ENCODE measurements at regions of chr2 and their contacts with region 1.

Region 1: DNA sequence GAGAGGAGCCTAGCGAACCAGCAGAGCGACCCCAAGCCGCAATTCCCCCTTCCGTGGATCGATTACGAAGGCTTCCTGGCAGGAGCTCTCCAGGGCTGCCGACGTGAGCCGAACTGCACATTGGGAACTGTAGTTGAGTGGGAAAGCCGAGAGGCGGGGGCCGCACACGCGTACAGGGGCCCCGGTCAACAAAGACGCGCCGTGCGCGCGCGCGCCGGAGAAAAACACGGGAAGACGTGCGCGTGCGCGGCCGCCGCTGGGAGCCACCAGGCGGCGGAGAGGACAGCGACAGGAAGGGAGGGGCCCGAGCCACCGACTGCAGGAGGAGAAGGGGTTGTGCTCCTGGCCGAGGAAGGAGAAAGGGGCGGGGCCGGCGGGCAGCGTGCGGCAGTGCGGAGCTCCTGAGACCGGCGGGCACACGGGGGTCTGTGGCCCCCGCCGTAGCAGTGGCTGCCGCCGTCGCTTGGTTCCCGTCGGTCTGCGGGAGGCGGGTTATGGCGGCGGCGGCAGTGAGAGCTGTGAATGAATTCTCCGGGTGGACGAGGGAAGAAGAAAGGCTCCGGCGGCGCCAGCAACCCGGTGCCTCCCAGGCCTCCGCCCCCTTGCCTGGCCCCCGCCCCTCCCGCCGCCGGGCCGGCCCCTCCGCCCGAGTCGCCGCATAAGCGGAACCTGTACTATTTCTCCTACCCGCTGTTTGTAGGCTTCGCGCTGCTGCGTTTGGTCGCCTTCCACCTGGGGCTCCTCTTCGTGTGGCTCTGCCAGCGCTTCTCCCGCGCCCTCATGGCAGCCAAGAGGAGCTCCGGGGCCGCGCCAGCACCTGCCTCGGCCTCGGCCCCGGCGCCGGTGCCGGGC is at the start of gene SPAST:
- DNase-seq: peak; percentile 99
- ATAC-seq: peak; percentile 89
- H3K4me3 ChIP-seq: peak within 1 kb of the TSS; percentile 93
- H3K27ac ChIP-seq: peak within 1 kb of the TSS; percentile 48
- H3K4me1 ChIP-seq: peaks cover 19% of the 10 kb centered on the region
- H3K27me3 ChIP-seq: no peaks in the 10 kb centered on the region
- CTCF ChIP-seq: peak; percentile 37; the same call in 1 of the 2 replicates
- total RNA-seq, gene SPAST: 15.5 and 21.6 TPM in 2 replicates

Region 2: DNA sequence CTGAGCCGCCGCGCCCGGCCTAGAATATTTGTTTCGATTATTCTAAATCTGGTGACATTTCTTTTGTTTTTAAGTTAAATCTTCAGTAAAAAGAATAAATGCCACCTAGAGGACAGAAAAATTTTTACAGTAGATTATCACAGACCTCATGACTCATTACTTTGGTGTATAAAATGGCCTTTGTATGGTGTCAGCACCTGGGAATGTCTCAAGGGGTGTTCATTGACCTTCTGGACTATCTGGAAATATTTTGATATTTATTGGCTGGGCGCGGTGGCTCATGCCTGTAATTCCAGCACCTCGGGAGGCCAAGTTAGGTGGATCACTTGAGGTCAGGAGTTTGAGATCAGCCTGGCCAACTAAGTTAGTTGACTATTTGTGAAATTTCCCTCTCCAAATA is 71.9 kb after region 1 on chr2:
- CTCF ChIA-PET with region 1: no interaction called
- POLR2A ChIA-PET with region 1: no interaction called
- intact Hi-C with region 1: loop called (anchors 2 kb)
- DNase-seq: peak; percentile 89
- ATAC-seq: peak; percentile 99
- H3K4me3 ChIP-seq: no peak overlapping the region
- H3K27ac ChIP-seq: peak overlapping the region; percentile 14; the same call in 1 of the 2 replicates
- H3K4me1 ChIP-seq: peaks cover 6% of the 10 kb centered on the region
- H3K27me3 ChIP-seq: no peaks in the 10 kb centered on the region
- CTCF ChIP-seq: peak; percentile 58

Region 3: DNA sequence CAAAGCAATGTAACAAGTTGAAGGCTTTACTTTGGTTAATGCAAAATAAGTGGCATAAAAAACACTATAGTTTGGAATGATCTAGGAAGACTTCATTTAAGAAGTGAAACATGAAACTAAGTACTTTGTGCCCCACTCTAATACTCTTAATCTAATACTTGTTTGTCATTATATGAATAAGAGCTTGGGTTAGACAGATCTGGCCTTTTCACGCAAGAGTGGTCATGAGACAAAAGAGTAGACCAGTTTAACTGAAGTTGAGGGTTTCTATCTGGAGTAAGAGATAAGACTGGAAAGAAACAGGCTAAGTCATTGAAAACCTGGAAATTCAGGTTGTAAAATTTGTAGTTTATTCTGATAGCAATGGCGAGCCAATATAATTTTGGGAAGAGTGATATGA is 105.0 kb after region 1 on chr2:
- CTCF ChIA-PET with region 1: interaction called, 6 read pairs
- POLR2A ChIA-PET with region 1: interaction called, 8 read pairs
- intact Hi-C with region 1: loop called (anchors 2 kb)
- DNase-seq: no peak
- ATAC-seq: no peak
- H3K4me3 ChIP-seq: no peak overlapping the region
- H3K27ac ChIP-seq: no peak overlapping the region
- H3K4me1 ChIP-seq: peaks cover 6% of the 10 kb centered on the region; the same call in 1 of the 2 replicates
- H3K27me3 ChIP-seq: no peaks in the 10 kb centered on the region
- CTCF ChIP-seq: no peak

Region 4: DNA sequence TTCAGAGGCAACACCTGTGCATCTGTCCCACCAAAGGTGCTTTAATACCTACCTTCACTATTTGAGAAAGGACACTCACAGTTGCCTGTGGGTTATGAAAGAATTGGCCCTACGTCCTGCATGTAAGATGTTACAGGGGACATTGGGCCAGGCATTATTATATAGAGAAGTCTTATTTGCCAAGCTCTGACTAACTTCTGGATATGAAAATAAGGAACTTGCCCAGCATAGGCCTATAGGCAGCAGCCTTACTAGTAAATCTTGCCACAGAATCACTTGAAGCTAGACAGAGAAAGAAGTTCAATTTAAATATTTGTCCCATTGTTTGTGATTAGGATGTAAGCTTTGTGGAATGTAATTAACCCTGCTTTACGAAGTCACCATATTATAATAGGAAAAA is 159.4 kb after region 1 on chr2:
- CTCF ChIA-PET with region 1: no interaction called
- POLR2A ChIA-PET with region 1: no interaction called
- intact Hi-C with region 1: no loop called
- DNase-seq: no peak
- ATAC-seq: no peak
- H3K4me3 ChIP-seq: no peak overlapping the region
- H3K27ac ChIP-seq: no peak overlapping the region
- H3K4me1 ChIP-seq: no peaks in the 10 kb centered on the region
- H3K27me3 ChIP-seq: no peaks in the 10 kb centered on the region
- CTCF ChIP-seq: no peak